Activated T-helper 2 cell treated with anti-CD3 and anti-CD28 coated beads, Interferon-gamma antibody, Interleukin-2, Interleukin-4, amounts not matched to agents 10 μg/mL and 5 μg/mL and 100 μg/mL, durations not matched to agents 14 hours and 24 hours and 36 hours (primary cell): ENCODE measurements at regions of chr5 and their contacts with region 1.

Region 1: DNA sequence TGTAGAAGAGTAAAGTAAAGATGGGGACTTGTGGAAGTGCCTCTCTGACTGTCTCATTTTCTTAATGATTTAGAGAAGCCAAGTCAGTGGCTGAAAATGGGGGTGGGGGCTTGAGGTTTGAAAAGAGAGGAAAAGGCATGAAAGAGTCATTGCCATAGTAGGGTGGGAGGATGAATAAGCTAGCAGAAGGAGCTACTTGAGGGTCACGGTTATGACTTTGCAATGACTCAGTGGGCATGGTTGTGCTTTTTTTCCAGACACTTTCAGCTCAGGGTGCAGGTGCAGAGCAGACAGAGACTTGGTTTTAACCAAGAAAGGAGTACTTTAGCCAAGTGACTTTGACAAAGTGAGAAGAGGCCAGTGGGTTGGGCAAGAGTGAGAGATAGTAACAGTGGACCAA is 117.8 kb downstream of the PTTG1 start:
- DNase-seq: no peak
- H3K4me3 Mint-ChIP-seq: no peak overlapping the region
- H3K27ac Mint-ChIP-seq: no peak overlapping the region
- H3K4me1 Mint-ChIP-seq: peaks cover 32% of the 10 kb centered on the region
- H3K27me3 Mint-ChIP-seq: no peaks in the 10 kb centered on the region

Region 2: DNA sequence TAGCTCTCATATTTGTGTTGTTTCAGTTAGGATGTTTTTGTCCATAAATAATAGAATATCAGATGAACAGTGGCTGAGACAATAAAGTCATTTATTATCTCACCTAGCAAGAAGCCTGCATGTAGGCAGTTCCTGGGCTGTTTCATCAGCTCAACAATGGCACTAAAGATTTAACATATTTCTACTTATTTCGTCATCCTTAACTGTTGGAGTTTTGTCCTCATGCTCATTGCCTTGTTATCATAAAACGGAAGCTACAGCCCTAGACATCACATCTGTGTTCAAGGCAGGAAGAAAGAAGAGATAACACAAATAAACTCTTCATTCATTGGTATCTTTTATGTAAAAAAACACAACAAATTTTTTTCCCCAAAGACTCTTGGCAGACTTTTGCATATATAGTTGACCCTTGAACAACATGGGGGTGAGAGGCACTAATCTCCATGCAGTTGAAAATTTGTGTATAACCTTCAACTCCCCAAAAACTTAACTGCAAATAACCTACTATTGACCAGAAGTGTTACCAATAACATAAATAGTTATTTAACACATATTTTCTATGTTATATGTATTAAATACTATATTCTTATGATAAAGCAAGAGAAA is 900.4 kb before region 1 on chr5:
- intact Hi-C with region 1: no loop called
- DNase-seq: no peak
- H3K4me3 Mint-ChIP-seq: no peak overlapping the region
- H3K27ac Mint-ChIP-seq: no peak overlapping the region
- H3K4me1 Mint-ChIP-seq: no peaks in the 10 kb centered on the region
- H3K27me3 Mint-ChIP-seq: peaks cover 7% of the 10 kb centered on the region

Region 3: GRCh38 chr5:160008877-160009590 is 530.4 kb before region 1 on chr5 and contains the start of gene TTC1:
- intact Hi-C with region 1: loop called (anchors 10 kb)
- DNase-seq: peak; percentile 89
- H3K4me3 Mint-ChIP-seq: peak within 1 kb of the TSS; percentile 94
- H3K27ac Mint-ChIP-seq: peak within 1 kb of the TSS; percentile 92
- H3K4me1 Mint-ChIP-seq: peaks cover 19% of the 10 kb centered on the region
- H3K27me3 Mint-ChIP-seq: no peaks in the 10 kb centered on the region
- total RNA-seq, gene TTC1: 64.0 and 64.9 TPM in 2 replicates

Region 4: DNA sequence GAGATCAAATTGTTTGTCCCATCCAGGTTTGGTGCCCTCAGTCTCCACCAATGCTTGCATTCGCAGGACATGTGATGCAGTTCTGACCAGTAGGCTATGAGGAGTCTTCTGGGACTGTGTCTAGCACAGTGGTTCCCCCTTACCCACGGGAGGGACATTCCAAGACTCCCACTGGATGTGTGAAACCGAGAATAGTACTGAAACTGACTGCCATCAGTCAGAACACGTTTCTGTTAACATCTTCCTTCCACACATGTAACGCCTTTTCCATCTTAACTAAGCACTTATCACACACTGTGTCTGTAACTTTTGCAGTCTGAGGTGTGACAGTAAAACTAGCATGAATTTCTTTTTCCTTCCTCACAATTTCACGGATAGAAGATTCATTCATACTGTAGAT is 43.1 kb before region 1 on chr5:
- intact Hi-C with region 1: loop called (anchors 2 kb)
- DNase-seq: no peak
- H3K4me3 Mint-ChIP-seq: no peak overlapping the region
- H3K27ac Mint-ChIP-seq: peak overlapping the region; percentile 75
- H3K4me1 Mint-ChIP-seq: peaks cover 42% of the 10 kb centered on the region
- H3K27me3 Mint-ChIP-seq: no peaks in the 10 kb centered on the region

Region 5: DNA sequence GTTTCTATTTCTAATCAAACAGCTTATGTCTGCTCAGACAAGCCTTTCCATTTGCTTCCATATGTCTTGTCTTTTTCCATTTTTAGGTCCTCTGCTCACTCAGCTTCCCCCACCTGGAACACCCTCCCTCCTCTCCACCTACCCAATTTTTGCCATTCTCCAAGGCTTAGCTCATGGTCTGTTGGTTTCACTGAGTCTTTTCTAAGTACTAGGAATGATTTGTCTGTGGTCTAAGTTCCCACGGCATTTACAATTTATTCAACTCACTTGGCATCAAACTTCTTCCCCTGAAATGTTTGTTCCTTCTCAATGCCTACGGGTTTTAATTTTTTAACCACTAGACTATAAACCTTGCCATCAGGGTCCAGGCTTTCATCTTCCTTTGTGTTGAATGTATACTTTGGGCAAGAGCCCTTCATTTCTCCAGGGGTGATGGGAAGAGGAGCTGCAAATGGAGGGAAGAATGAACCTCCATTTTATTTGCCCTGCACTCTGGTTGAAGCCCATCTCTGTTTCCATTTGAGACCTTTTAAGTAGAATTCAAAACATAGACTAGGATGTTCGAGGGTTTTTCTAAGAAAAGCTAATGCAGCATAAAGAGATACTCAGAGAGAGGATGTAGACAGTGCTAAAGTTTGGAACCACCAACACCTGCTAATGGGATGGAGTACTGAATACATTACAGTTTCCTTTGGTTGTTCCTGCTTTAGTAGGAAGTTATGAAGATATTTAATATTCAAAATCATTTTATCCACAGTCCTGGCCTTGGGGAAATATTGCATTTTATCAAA is 13.8 kb before region 1 on chr5:
- intact Hi-C with region 1: loop called (anchors 2 kb)
- DNase-seq: no peak
- H3K4me3 Mint-ChIP-seq: no peak overlapping the region
- H3K27ac Mint-ChIP-seq: peak overlapping the region; percentile 71
- H3K4me1 Mint-ChIP-seq: peaks cover 27% of the 10 kb centered on the region
- H3K27me3 Mint-ChIP-seq: no peaks in the 10 kb centered on the region

Region 6: DNA sequence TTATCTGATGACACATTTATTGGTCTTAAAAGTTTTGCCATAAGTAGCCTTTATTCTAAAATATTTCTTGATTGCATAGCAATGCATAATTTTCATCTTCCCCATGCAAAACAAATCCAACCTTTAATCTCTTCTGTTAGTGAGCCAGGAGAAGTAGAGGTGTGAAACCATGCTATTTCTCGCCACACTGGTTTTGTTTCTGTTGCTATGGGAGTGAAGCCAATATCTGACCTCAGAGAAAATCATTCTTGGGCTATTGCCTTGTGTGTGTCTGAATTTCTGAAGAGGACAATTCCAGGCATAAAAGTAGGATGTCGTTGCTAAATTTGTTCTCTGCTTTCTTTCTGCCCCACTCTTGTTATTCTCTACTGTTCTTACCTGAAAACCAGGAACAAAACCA is 65.8 kb after region 1 on chr5:
- intact Hi-C with region 1: no loop called
- DNase-seq: no peak
- H3K4me3 Mint-ChIP-seq: no peak overlapping the region
- H3K27ac Mint-ChIP-seq: no peak overlapping the region
- H3K4me1 Mint-ChIP-seq: no peaks in the 10 kb centered on the region
- H3K27me3 Mint-ChIP-seq: no peaks in the 10 kb centered on the region

Region 7: DNA sequence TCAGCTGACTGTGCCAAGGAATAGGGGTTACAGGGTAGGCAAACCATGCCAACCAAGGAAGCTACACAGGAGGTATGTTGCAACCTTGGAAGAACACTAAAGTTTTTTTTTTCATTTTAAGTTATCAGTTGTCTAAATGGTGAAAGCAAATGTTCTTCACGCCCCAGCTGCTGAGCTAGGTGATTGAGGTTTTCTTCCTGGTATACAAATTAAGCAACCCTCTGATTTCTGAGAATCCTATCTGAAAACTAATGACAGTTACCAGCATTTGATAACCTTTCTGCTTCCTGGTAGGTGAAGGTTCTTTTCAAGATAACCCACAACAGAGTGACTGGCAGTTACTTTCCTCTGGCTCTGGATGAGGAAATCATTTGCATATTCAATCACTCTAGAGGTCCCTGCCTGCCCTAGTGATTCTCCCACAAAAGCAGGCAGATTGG is 117.7 kb after region 1 on chr5:
- intact Hi-C with region 1: loop called (anchors 10 kb)
- DNase-seq: no peak
- H3K4me3 Mint-ChIP-seq: no peak overlapping the region
- H3K27ac Mint-ChIP-seq: peak overlapping the region; percentile 24
- H3K4me1 Mint-ChIP-seq: peaks cover 21% of the 10 kb centered on the region
- H3K27me3 Mint-ChIP-seq: no peaks in the 10 kb centered on the region